ENCODE measurements at regions of chr2 and their contacts with region 1.

Region 1: GRCh38 chr2:196182439-196183171 is 11.2 kb upstream of the STK17B start:
- DNase-seq: peak in 2 of 14 experiments; percentile 60 to 74
- ATAC-seq: no peak
- H3K4me3 ChIP-seq: no peak overlapping the region
- H3K4me3 Mint-ChIP-seq: peak overlapping the region; percentile 76
- H3K27ac ChIP-seq: peak overlapping the region; percentile 68 to 79
- H3K27ac Mint-ChIP-seq: peak overlapping the region; percentile 94
- H3K4me1 ChIP-seq: peaks cover 76% of the 10 kb centered on the region
- H3K4me1 Mint-ChIP-seq: peaks cover 94% of the 10 kb centered on the region
- H3K27me3 ChIP-seq: no peaks in the 10 kb centered on the region
- H3K27me3 Mint-ChIP-seq: no peaks in the 10 kb centered on the region
- CTCF ChIP-seq: no peak

Region 2: GRCh38 chr2:194718881-194719280 is 1463.7 kb before region 1 on chr2:
- CTCF ChIA-PET with region 1: no interaction called
- POLR2A ChIA-PET with region 1: no interaction called
- intact Hi-C with region 1: no loop called
- DNase-seq: no peak
- ATAC-seq: no peak
- H3K4me3 ChIP-seq: no peak overlapping the region
- H3K4me3 Mint-ChIP-seq: no peak overlapping the region
- H3K27ac ChIP-seq: no peak overlapping the region
- H3K27ac Mint-ChIP-seq: no peak overlapping the region
- H3K4me1 ChIP-seq: no peaks in the 10 kb centered on the region
- H3K4me1 Mint-ChIP-seq: no peaks in the 10 kb centered on the region
- H3K27me3 ChIP-seq: no peaks in the 10 kb centered on the region
- H3K27me3 Mint-ChIP-seq: no peaks in the 10 kb centered on the region
- CTCF ChIP-seq: no peak

Region 3: DNA sequence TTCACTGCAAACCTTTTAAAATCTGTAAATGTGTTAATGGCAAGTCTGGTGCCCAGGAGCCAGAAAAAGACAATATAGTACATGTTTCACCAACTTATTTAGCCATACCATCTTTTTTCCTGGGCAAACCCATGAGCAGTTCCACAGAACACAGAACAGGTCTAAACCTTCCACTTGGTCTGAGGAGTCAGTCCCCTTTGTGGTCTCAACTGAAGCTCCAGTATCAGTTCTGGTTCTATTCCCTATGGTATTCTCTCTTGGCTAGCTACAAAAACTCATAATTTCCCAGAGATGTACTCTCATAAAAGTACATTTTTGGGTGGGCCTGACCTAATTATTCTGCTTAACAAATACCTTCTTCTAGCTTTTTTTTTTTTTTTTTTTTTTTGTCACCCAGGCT is 42.4 kb before region 1 on chr2:
- CTCF ChIA-PET with region 1: no interaction called
- POLR2A ChIA-PET with region 1: no interaction called
- intact Hi-C with region 1: no loop called
- DNase-seq: no peak
- ATAC-seq: no peak
- H3K4me3 ChIP-seq: no peak overlapping the region
- H3K4me3 Mint-ChIP-seq: peak overlapping the region; percentile 45
- H3K27ac ChIP-seq: no peak overlapping the region
- H3K27ac Mint-ChIP-seq: peak overlapping the region; percentile 77
- H3K4me1 ChIP-seq: peaks cover 24% of the 10 kb centered on the region
- H3K4me1 Mint-ChIP-seq: peaks cover 77% of the 10 kb centered on the region
- H3K27me3 ChIP-seq: no peaks in the 10 kb centered on the region
- H3K27me3 Mint-ChIP-seq: no peaks in the 10 kb centered on the region
- CTCF ChIP-seq: no peak

Region 4: GRCh38 chr2:196200557-196200956 is 18.0 kb after region 1 on chr2:
- CTCF ChIA-PET with region 1: interaction called, 9 read pairs
- POLR2A ChIA-PET with region 1: interaction called, 85 read pairs
- intact Hi-C with region 1: no loop called
- DNase-seq: peak in 5 of 14 experiments; percentile 21 to 76 (median 67)
- ATAC-seq: peak; percentile 80
- H3K4me3 ChIP-seq: peak overlapping the region; percentile 37
- H3K4me3 Mint-ChIP-seq: peak overlapping the region; percentile 74
- H3K27ac ChIP-seq: peak overlapping the region; percentile 19 to 60
- H3K27ac Mint-ChIP-seq: peak overlapping the region; percentile 90
- H3K4me1 ChIP-seq: peaks cover 14% of the 10 kb centered on the region
- H3K4me1 Mint-ChIP-seq: peaks cover 56% of the 10 kb centered on the region
- H3K27me3 ChIP-seq: no peaks in the 10 kb centered on the region
- H3K27me3 Mint-ChIP-seq: no peaks in the 10 kb centered on the region
- CTCF ChIP-seq: no peak

Region 5: GRCh38 chr2:196213252-196213980 is 30.8 kb after region 1 on chr2:
- CTCF ChIA-PET with region 1: interaction called, 6 read pairs
- POLR2A ChIA-PET with region 1: interaction called, 59 read pairs
- intact Hi-C with region 1: no loop called
- DNase-seq: peak in 2 of 14 experiments; percentile 66 to 73
- ATAC-seq: no peak
- H3K4me3 ChIP-seq: no peak overlapping the region
- H3K4me3 Mint-ChIP-seq: peak overlapping the region; percentile 26
- H3K27ac ChIP-seq: peak overlapping the region; percentile 6 to 15
- H3K27ac Mint-ChIP-seq: peak overlapping the region; percentile 95
- H3K4me1 ChIP-seq: peaks cover 45% of the 10 kb centered on the region
- H3K4me1 Mint-ChIP-seq: peaks cover 88% of the 10 kb centered on the region
- H3K27me3 ChIP-seq: no peaks in the 10 kb centered on the region
- H3K27me3 Mint-ChIP-seq: no peaks in the 10 kb centered on the region
- CTCF ChIP-seq: no peak

Measured in CD4-positive, alpha-beta T cell (primary cell).